Activated CD8-positive, alpha-beta T cell treated with anti-CD3 and anti-CD28 coated beads for 36 hours (primary cell): ENCODE measurements at regions of chr11 and their contacts with region 1.

Region 1: DNA sequence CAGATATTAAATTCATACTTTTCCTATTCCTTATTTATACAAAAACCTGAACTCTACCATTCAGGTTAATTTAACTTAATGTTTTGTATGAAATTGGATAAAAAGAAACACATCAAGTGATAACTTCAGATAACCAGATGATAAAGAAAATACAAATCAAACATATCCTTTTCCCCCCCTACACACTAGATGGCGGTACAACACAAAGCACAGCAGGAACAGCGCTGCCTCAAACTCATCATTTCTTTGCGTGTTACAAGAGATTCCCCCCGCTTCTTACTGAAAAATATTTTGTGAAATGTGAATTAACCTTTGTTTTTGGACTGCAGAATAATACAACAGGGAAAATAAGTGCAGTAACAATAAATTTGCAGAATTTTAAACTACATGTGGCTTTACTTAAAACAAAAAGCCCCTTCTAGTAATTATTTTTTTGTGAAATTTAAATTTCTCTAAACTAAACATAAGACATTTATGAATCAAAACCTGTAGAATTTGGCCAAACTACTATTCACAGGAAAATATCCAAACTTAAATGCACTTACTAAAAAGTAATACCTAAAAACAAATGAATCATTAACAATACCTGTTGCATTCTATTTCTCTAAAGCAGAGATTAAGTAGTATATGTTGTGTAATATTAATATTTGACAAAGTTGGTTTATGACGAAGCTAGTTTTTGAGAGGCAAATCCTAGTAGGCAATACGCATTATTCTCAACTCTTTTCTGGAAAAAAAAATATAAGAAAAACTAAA is 74.4 kb downstream of the ARHGAP32 start:
- DNase-seq: peak; percentile 49
- ATAC-seq: no peak
- H3K4me3 Mint-ChIP-seq: no peak overlapping the region
- H3K27ac Mint-ChIP-seq: no peak overlapping the region
- H3K4me1 Mint-ChIP-seq: peaks cover 2% of the 10 kb centered on the region
- H3K27me3 Mint-ChIP-seq: no peaks in the 10 kb centered on the region
- CTCF ChIP-seq: peak; percentile 91

Region 2: GRCh38 chr11:129077191-129077590 is 40.6 kb before region 1 on chr11:
- CTCF ChIA-PET with region 1: no interaction called
- POLR2A ChIA-PET with region 1: no interaction called
- intact Hi-C with region 1: no loop called
- DNase-seq: no peak
- ATAC-seq: no peak
- H3K4me3 Mint-ChIP-seq: no peak overlapping the region
- H3K27ac Mint-ChIP-seq: no peak overlapping the region
- H3K4me1 Mint-ChIP-seq: no peaks in the 10 kb centered on the region
- H3K27me3 Mint-ChIP-seq: no peaks in the 10 kb centered on the region
- CTCF ChIP-seq: no peak

Region 3: GRCh38 chr11:129279326-129280026 is 161.7 kb after region 1 on chr11:
- CTCF ChIA-PET with region 1: interaction called, 4 read pairs
- POLR2A ChIA-PET with region 1: no interaction called
- intact Hi-C with region 1: loop called (anchors 5 kb)
- DNase-seq: peak; percentile 50
- ATAC-seq: peak; percentile 48
- H3K4me3 Mint-ChIP-seq: peak overlapping the region; percentile 71
- H3K27ac Mint-ChIP-seq: peak overlapping the region; percentile 76
- H3K4me1 Mint-ChIP-seq: peaks cover 31% of the 10 kb centered on the region
- H3K27me3 Mint-ChIP-seq: peaks cover 13% of the 10 kb centered on the region
- CTCF ChIP-seq: no peak

Region 4: DNA sequence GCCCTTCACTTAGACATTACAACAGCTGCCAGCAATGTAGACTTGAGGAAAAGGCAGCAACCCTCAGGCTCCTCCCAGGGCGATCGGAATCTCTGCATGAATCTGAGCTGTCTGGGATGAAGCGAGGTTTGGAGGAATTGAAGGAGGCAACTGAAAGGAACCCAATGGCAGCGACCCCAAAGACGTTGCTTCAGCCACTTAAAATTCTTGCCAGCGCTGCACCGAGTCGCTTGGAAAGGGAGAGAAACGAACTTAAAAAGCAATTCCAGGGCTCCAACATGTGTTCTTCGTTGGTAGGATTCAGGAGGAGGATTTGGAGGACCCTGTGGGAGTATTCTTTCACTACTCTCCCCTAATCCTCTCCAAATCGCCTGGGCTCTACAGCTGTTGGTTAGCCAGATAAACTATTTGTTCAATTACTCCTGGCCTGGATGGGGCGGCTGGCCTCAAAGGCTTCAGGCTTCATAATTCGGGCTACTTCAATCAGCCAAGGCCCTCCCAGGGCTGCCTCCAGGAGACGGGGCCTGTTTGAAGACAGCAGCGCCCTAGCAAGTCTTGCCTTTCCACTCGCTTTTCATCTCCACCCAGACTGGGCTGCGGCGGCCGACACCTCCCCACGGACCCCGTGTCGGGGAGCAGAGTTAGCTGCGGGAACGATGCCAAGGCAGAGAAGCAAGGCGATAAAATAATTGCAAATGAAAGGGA is 625.5 kb after region 1 on chr11:
- CTCF ChIA-PET with region 1: no interaction called
- POLR2A ChIA-PET with region 1: no interaction called
- intact Hi-C with region 1: loop called (anchors 10 kb)
- DNase-seq: no peak
- ATAC-seq: no peak
- H3K4me3 Mint-ChIP-seq: no peak overlapping the region
- H3K27ac Mint-ChIP-seq: no peak overlapping the region
- H3K4me1 Mint-ChIP-seq: no peaks in the 10 kb centered on the region
- H3K27me3 Mint-ChIP-seq: peaks cover 1% of the 10 kb centered on the region
- CTCF ChIP-seq: no peak